ENCODE measurements at regions of chr5 and their contacts with region 1.

Region 1: DNA sequence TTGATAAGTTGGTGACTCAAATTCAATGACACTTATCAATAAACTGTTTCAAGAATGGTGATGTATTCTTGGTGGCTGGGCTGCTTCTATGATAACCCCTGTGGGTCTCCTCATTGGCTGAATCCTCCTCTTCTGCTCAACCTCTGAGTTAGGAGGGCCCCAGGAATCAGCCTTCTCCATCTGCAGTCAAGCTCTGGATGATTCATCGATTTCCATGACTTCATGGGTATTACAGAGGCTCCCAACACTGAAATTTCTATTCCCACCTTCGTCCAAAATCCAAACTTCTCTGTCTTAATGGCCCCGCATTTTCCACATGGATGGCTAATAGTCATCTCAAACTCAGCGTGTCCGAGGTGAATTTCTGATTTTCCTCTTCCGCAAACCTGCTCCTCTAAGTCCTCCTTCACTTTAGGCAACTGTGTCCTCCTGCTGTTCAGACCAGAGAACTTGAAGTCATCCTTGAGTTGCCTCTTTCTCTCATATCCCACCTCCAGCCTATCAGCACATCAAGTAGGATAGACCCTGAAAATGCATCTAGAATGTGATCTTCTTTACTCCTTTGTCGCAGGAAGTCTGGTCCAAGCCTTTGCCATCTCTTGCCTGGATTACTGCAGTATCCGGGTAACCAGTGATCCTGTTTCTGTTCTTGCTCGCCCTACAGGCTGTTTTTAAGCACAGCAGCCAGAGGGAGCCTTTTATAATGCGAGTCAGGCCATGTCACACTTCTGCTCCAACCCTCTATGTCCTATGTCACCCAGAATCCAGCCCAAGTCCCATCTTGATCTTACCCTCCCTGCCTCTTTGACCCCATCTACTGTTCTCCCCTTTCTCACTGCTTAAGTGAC is 41.4 kb upstream of the IL7R start:
- DNase-seq: peak in 2 of 9 donors; percentile 41 to 45
- ATAC-seq: no peak
- H3K4me3 ChIP-seq: peak overlapping the region; percentile 25
- H3K4me3 Mint-ChIP-seq: no peak overlapping the region
- H3K27ac ChIP-seq: peak overlapping the region; percentile 23
- H3K27ac Mint-ChIP-seq: no peak overlapping the region
- H3K4me1 ChIP-seq: peaks cover 67 to 88% of the 10 kb centered on the region in 2 donors
- H3K4me1 Mint-ChIP-seq: peaks cover 25 to 56% (median 43%) of the 10 kb centered on the region in 7 donors
- H3K27me3 ChIP-seq: no peaks in the 10 kb centered on the region
- H3K27me3 Mint-ChIP-seq: no peaks in the 10 kb centered on the region

Region 2: GRCh38 chr5:35672995-35673394 is 142.3 kb before region 1 on chr5:
- CTCF ChIA-PET with region 1: no interaction called
- POLR2A ChIA-PET with region 1: interaction called, 3 read pairs
- intact Hi-C with region 1: loop called in 1 of 2 experiments (anchors 1 kb)
- DNase-seq: peak in 8 of 9 donors; percentile 30 to 68 (median 52)
- ATAC-seq: peak; percentile 88
- H3K4me3 ChIP-seq: peak overlapping the region; percentile 14
- H3K4me3 Mint-ChIP-seq: peak overlapping the region in 9 of 10 donors; percentile 47 to 81 (median 66)
- H3K27ac ChIP-seq: peak overlapping the region; percentile 62
- H3K27ac Mint-ChIP-seq: peak overlapping the region; percentile 87 to 96 (median 92)
- H3K4me1 ChIP-seq: peaks cover 36 to 41% of the 10 kb centered on the region in 2 donors
- H3K4me1 Mint-ChIP-seq: peaks cover 20 to 88% (median 75%) of the 10 kb centered on the region in 7 donors
- H3K27me3 ChIP-seq: no peaks in the 10 kb centered on the region
- H3K27me3 Mint-ChIP-seq: no peaks in the 10 kb centered on the region

Region 3: DNA sequence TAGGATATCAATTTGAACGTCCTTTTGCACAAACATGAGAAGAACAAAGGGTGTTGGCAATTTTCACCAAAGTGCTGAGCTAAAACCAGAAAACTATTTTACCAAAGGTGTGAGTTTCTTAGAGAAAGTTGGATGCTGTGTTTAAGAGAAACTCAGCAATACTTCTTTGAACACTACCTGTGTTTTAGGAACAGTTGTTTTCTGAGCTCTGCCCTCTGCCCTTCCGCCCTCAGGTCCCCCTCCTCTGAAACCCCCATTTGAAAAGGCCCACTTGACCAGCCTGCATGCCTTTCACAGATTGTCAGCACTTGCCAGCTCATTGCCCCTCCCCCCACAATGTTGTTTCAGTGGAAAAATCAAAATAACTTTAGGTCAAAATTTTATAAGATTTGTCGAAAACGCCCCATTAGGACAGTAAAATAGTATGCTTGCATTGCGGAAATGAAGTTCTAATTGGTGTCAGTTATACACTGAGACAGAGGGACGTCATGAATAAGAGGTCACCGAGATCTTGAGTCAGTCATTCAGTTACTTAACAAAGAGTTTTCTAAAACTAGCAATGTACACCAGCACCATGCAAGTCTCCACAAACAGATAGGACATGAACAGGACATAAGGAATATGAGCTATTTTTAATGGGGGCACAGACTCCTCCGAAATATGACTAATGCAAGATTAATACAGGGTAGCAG is 20.5 kb before region 1 on chr5:
- CTCF ChIA-PET with region 1: interaction called, 3 read pairs
- POLR2A ChIA-PET with region 1: interaction called, 82 read pairs
- intact Hi-C with region 1: loop called (anchors 1 kb)
- DNase-seq: no peak
- ATAC-seq: no peak
- H3K4me3 ChIP-seq: no peak overlapping the region
- H3K4me3 Mint-ChIP-seq: peak overlapping the region in 8 of 10 donors; percentile 23 to 71 (median 56)
- H3K27ac ChIP-seq: no peak overlapping the region
- H3K27ac Mint-ChIP-seq: peak overlapping the region; percentile 33 to 97 (median 84)
- H3K4me1 ChIP-seq: peaks cover 38 to 60% of the 10 kb centered on the region in 2 donors
- H3K4me1 Mint-ChIP-seq: peaks cover 53 to 95% (median 91%) of the 10 kb centered on the region in 7 donors
- H3K27me3 ChIP-seq: no peaks in the 10 kb centered on the region
- H3K27me3 Mint-ChIP-seq: no peaks in the 10 kb centered on the region

Region 4: DNA sequence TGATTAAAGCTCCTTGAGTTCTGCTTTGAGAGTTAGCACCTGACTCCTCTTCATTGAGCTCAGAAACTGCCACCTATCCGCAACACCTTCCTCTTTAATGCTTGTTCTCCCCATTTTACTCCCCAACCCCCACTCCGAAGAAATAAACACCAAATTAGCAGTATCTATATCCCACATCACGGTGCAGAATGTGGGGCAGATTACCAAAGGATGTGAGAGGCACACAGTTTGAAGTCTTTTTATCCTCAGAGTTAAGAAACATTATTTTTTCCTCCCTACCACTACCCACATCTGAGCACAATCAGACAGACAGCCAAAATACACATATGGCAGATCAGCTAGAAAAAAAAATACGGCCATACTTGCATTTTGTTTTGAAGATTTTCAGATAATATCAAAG is 15.3 kb after region 1 on chr5:
- CTCF ChIA-PET with region 1: interaction called, 4 read pairs
- POLR2A ChIA-PET with region 1: interaction called, 126 read pairs
- intact Hi-C with region 1: loop called (anchors 1 kb)
- DNase-seq: peak in 7 of 9 donors; percentile 77 to 92 (median 89)
- ATAC-seq: peak; percentile 94
- H3K4me3 ChIP-seq: peak overlapping the region; percentile 4
- H3K4me3 Mint-ChIP-seq: peak overlapping the region; percentile 1 to 78 (median 70)
- H3K27ac ChIP-seq: peak overlapping the region; percentile 59
- H3K27ac Mint-ChIP-seq: peak overlapping the region; percentile 82 to 98 (median 89)
- H3K4me1 ChIP-seq: peaks cover 69 to 78% of the 10 kb centered on the region in 2 donors
- H3K4me1 Mint-ChIP-seq: peaks cover 53 to 99% (median 90%) of the 10 kb centered on the region in 7 donors
- H3K27me3 ChIP-seq: no peaks in the 10 kb centered on the region
- H3K27me3 Mint-ChIP-seq: no peaks in the 10 kb centered on the region

Region 5: DNA sequence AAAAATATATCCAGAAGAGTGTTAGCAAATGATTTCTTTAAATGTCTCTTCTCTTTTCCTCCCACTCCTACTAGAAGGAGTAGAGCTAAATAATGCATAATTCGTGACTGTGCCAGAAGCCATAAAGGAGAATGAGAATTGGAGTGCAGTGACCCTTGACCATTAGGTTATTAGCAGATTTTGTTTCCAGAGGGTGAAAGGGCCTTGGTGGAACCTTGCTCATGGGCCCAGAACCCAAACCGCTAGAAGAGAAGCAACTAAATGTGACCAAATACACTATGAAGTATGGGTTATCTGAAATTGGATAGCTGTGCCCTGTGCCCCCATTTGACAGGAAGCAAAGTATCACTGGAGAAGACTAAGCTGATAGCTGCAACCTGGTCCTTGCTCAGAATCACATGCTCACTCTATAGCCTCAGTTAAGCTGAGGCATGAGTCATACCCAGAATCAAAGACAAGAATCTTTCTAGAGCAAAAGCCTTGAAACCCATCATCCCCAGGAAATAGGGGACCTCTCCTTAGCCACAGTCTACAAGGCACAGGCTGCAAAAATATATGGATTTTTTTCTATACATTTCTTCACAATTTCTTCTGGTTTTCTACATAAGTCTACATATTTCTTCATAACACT is 86.8 kb after region 1 on chr5:
- CTCF ChIA-PET with region 1: no interaction called
- POLR2A ChIA-PET with region 1: interaction called, 3 read pairs
- intact Hi-C with region 1: loop called in 1 of 2 experiments (anchors 1 kb)
- DNase-seq: no peak
- ATAC-seq: peak; percentile 48
- H3K4me3 ChIP-seq: no peak overlapping the region
- H3K4me3 Mint-ChIP-seq: peak overlapping the region in 1 of 10 donors; percentile 57
- H3K27ac ChIP-seq: no peak overlapping the region
- H3K27ac Mint-ChIP-seq: peak overlapping the region in 2 of 9 donors; percentile 25 to 40
- H3K4me1 ChIP-seq: peaks cover 10 to 12% of the 10 kb centered on the region in 2 donors
- H3K4me1 Mint-ChIP-seq: peaks cover 28 to 76% (median 63%) of the 10 kb centered on the region in 7 donors
- H3K27me3 ChIP-seq: no peaks in the 10 kb centered on the region
- H3K27me3 Mint-ChIP-seq: no peaks in the 10 kb centered on the region